HepG2 (cell line): ENCODE measurements at regions of chr7 and their contacts with region 1.

Region 1: DNA sequence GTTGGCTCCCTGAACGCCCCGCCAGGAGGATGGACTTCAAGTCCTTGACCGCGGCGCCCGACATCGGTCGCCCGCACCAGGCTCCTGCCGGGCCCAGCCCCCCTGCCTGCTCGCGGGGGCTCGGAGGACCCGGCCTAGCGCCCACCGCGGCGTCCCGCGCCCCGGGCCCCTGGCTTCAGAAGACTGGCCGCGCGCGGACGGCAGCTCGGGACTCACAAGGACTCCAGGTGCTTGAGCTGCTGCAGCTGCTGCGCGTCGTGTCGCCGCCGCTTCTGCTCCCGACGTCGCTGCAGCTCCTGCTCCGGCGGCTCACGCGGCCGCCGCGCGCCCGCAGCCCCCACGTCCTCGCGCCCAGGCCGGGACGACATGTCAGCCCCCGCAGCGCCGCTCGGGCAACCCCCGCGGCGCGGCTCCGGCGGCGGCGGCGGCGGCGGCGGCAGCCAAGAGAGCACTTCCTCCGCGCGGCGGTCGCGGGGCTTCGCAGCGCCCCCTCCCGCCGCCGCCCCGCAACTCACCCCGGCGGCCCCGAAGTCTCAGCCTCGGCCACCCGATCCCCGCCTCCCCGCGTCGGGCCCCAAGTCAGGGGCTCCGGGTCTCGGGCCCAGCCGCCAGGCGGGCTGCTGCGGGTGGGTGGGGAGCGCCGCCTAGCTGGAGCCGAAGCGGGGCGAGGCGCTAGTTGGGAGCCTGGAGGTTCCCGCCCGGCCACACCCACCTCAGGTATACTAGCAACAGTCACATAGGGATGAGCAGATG is at the start of gene RP9:
- DNase-seq: peak; percentile 71
- ATAC-seq: peak; percentile 91
- H3K4me3 ChIP-seq: peak within 1 kb of the TSS; percentile 85 to 88 (median 87)
- H3K27ac ChIP-seq: peak within 1 kb of the TSS; percentile 77
- H3K4me1 ChIP-seq: peaks cover 55% of the 10 kb centered on the region
- H3K27me3 ChIP-seq: peaks cover 1 to 6% of the 10 kb centered on the region in 2 experiments; a peak in 2 of 5 replicates
- CTCF ChIP-seq: peak; percentile 76
- EP300 ChIP-seq: no peak
- POLR2A ChIP-seq: peak; percentile 69
- RAD21 ChIP-seq: peak; percentile 75; the same call in 1 of the 2 replicates
- total RNA-seq, gene RP9: 14.2 and 15.1 TPM in 2 replicates

Region 2: GRCh38 chr7:33062782-33063443 is 46.3 kb before region 1 on chr7:
- CTCF ChIA-PET with region 1: no interaction called
- POLR2A ChIA-PET with region 1: interaction called, 10 read pairs
- in situ Hi-C with region 1: no loop called
- intact Hi-C with region 1: loop called (anchors 2 kb)
- DNase-seq: peak; percentile 90
- ATAC-seq: peak; percentile 98
- H3K4me3 ChIP-seq: peak overlapping the region; percentile 78 to 100 (median 93)
- H3K27ac ChIP-seq: peak overlapping the region; percentile 90
- H3K4me1 ChIP-seq: peaks cover 41% of the 10 kb centered on the region
- H3K27me3 ChIP-seq: no peaks in the 10 kb centered on the region
- CTCF ChIP-seq: peak; percentile 18; the same call in 1 of the 2 replicates
- EP300 ChIP-seq: no peak
- POLR2A ChIP-seq: peak; percentile 46 to 78; a peak in 3 of 4 replicates
- RAD21 ChIP-seq: no peak; the same call in 1 of the 2 replicates

Region 3: DNA sequence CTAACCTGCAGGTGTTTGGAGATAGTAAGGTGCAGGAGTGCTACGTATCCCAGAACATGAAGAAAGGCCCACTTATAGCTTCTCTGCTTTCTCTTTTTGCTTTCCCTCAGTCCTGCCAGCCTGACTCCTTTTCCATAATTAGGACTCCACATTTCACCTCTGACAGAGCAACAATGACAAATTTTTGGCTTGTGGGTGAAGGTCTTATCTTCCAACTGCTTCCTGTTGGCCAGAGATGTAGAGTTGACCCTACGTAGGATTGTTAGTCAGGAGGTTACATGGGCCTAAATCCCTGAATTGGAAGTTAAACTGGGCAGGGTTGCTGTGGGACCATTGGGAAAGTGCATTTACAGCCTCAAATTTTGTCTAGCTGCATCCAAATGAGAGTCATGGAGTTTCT is 21.3 kb before region 1 on chr7:
- CTCF ChIA-PET with region 1: no interaction called
- POLR2A ChIA-PET with region 1: no interaction called
- in situ Hi-C with region 1: no loop called
- intact Hi-C with region 1: no loop called
- DNase-seq: no peak
- ATAC-seq: no peak
- H3K4me3 ChIP-seq: no peak overlapping the region
- H3K27ac ChIP-seq: no peak overlapping the region
- H3K4me1 ChIP-seq: no peaks in the 10 kb centered on the region
- H3K27me3 ChIP-seq: no peaks in the 10 kb centered on the region
- CTCF ChIP-seq: no peak
- EP300 ChIP-seq: no peak
- POLR2A ChIP-seq: no peak
- RAD21 ChIP-seq: no peak